ENCODE measurements at regions of chr2 and their contacts with region 1.

Region 1: DNA sequence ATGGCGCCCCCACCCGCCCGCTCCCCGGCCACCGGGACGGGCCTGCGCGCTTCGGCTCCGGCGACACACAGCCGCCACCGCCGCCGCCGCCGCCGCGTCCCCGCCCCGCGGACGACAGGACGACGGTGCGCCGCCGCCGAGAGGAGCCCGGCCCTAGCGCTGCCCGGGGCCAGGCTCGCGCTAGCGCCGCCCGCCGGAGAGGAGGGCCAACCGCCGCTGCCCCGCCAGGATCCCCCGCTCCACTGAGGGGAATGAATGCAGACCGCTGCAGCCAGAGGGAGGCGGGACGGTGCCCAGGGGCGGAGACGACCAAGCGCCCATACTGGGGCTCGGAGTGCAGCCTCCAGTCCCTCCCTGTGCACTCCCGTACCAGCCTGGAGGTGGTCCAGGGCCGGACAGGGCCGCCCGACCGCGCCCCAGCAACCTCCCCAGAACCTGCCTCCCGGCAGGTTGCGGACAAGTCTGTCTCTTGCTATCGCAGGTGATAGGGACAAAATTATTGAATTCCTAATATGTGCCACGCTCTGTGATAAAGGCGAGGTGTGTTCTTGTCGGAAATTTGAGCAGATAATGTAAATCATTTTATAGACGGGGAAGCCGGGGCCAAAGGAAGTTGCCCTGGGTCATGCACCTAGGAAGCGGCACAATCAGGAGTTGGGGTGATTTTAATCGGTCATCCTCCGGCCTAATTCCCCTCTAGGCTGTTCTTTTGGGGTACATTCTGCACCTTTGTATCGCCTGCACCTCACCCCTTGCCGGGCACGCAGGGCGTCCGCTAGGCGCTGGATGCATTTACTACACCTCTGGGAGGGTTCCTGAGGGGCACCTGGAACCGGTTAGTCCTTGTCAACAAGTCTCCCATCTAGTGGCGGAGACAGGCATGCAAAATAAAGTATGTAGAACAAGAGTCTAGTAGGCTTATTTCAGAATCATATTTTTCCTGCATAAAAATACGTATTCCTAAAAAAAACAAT is at the start of gene TEX261:
- DNase-seq: peak; percentile 10
- H3K4me3 ChIP-seq: peak within 1 kb of the TSS; percentile 83
- CTCF ChIP-seq: peak; percentile 86

Region 2: DNA sequence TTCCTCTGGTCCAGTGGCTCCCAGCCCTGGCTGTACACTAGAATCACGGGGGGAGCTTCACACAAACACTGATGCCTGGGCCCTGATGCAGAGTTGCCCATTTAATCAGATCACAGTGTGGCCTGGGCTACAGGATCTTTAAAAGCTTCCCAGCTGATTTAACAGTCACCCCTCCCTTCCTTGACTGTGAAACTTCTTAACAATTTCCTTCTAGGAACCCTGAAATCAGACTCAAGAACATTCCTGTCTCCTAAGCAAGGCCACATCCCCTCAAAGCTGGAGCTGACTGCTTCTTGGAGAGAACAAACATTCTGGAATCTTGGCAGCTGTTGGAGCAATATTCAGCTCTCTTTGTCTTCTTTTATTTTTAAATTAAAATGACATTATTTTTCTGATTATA is 315.8 kb before region 1 on chr2:
- CTCF ChIA-PET with region 1: no interaction called
- POLR2A ChIA-PET with region 1: no interaction called
- DNase-seq: no peak
- H3K4me3 ChIP-seq: no peak overlapping the region
- CTCF ChIP-seq: no peak

Region 3: GRCh38 chr2:70984576-70985282 is 10.3 kb before region 1 on chr2:
- CTCF ChIA-PET with region 1: interaction called, 21 read pairs
- POLR2A ChIA-PET with region 1: no interaction called
- DNase-seq: no peak
- H3K4me3 ChIP-seq: no peak overlapping the region
- CTCF ChIP-seq: peak; percentile 90

Region 4: GRCh38 chr2:71006955-71007799 is 12.1 kb after region 1 on chr2:
- CTCF ChIA-PET with region 1: interaction called, 15 read pairs
- POLR2A ChIA-PET with region 1: no interaction called
- DNase-seq: no peak
- H3K4me3 ChIP-seq: no peak overlapping the region
- CTCF ChIP-seq: no peak